Activated T-helper 2 cell treated with anti-CD3 and anti-CD28 coated beads, Interferon-gamma antibody, Interleukin-2, Interleukin-4, amounts not matched to agents 10 μg/mL and 5 μg/mL and 100 μg/mL, durations not matched to agents 14 hours and 24 hours and 36 hours (primary cell): ENCODE measurements at regions of chr2 and their contacts with region 1.

Region 1: GRCh38 chr2:191189112-191189635 is 38.4 kb upstream of the STAT4 start:
- DNase-seq: no peak
- H3K4me3 Mint-ChIP-seq: peak overlapping the region; percentile 1
- H3K27ac Mint-ChIP-seq: no peak overlapping the region
- H3K4me1 Mint-ChIP-seq: peaks cover 40% of the 10 kb centered on the region
- H3K27me3 Mint-ChIP-seq: no peaks in the 10 kb centered on the region

Region 2: DNA sequence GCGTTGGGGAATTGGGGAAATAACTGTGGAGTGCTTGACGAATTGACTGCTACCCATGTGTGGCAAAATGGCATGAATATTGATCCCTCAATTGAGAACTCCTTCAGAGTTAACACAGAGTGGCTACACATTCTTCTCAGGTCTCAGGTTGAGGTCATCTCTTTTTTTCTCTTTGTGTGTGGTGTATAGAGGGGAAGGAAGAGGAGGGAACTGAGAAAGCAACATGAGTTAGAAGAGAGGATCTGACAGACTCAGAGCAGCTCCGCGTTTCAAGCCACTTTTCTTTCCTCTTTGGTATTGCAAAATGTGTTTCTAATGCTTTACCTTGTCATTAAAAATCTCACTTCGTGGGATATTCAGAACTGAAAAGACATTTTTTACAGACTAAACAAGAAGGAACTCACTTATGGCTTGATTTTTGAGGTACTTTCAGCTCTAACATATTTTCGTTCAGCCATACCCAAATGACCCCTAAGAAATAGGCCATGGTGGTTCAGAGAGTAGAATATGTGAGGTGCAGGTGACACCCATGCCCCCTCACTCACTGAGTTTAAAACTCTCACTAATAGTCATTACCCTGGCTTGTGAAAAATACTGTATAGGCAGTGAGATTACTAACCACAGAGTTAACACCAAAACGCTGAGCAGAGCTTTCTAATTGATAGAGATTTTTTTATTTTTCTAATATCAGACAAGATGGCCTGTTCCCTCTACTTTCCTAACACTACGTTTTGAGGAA is 60.8 kb before region 1 on chr2:
- intact Hi-C with region 1: loop called (anchors 5 kb)
- DNase-seq: no peak
- H3K4me3 Mint-ChIP-seq: no peak overlapping the region
- H3K27ac Mint-ChIP-seq: peak overlapping the region; percentile 71
- H3K4me1 Mint-ChIP-seq: peaks cover 62% of the 10 kb centered on the region
- H3K27me3 Mint-ChIP-seq: no peaks in the 10 kb centered on the region

Region 3: GRCh38 chr2:191171708-191172355 is 17.3 kb before region 1 on chr2:
- intact Hi-C with region 1: loop called (anchors 1 kb)
- DNase-seq: no peak
- H3K4me3 Mint-ChIP-seq: no peak overlapping the region
- H3K27ac Mint-ChIP-seq: peak overlapping the region; percentile 5
- H3K4me1 Mint-ChIP-seq: peaks cover 58% of the 10 kb centered on the region
- H3K27me3 Mint-ChIP-seq: no peaks in the 10 kb centered on the region

Region 4: GRCh38 chr2:191202881-191203397 is 13.8 kb after region 1 on chr2:
- intact Hi-C with region 1: no loop called
- DNase-seq: no peak
- H3K4me3 Mint-ChIP-seq: no peak overlapping the region
- H3K27ac Mint-ChIP-seq: peak overlapping the region; percentile 14
- H3K4me1 Mint-ChIP-seq: peaks cover 42% of the 10 kb centered on the region
- H3K27me3 Mint-ChIP-seq: no peaks in the 10 kb centered on the region

Region 5: GRCh38 chr2:191218292-191218898 is 29.2 kb after region 1 on chr2:
- intact Hi-C with region 1: loop called (anchors 1 kb)
- DNase-seq: no peak
- H3K4me3 Mint-ChIP-seq: no peak overlapping the region
- H3K27ac Mint-ChIP-seq: no peak overlapping the region
- H3K4me1 Mint-ChIP-seq: peaks cover 19% of the 10 kb centered on the region
- H3K27me3 Mint-ChIP-seq: no peaks in the 10 kb centered on the region

Region 6: GRCh38 chr2:191231995-191232394 is 42.8 kb after region 1 on chr2:
- intact Hi-C with region 1: loop called (anchors 5 kb)
- DNase-seq: no peak
- H3K4me3 Mint-ChIP-seq: no peak overlapping the region
- H3K27ac Mint-ChIP-seq: no peak overlapping the region
- H3K4me1 Mint-ChIP-seq: no peaks in the 10 kb centered on the region
- H3K27me3 Mint-ChIP-seq: no peaks in the 10 kb centered on the region

Region 7: DNA sequence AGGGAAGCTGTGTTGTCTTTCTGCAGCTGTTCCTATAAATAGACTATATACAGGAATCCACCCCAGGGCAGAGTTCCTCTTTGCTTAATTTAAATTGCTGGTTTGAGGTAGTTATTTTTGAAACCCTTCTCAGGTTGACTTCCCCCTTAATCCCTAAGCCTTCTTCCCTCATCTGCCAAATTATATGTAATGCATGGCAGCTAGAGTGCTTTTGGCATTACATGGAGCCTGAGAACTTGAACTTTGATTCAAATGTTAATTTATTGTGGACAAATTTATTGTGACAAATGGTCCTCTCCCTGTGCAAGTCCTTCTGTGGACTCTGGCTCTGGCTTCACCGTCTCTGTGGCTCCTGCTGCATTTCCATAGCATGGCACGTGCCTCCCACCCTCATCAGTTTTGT is 85.2 kb after region 1 on chr2:
- intact Hi-C with region 1: no loop called
- DNase-seq: no peak
- H3K4me3 Mint-ChIP-seq: no peak overlapping the region
- H3K27ac Mint-ChIP-seq: no peak overlapping the region
- H3K4me1 Mint-ChIP-seq: no peaks in the 10 kb centered on the region
- H3K27me3 Mint-ChIP-seq: peaks cover 2% of the 10 kb centered on the region